ENCODE measurements at regions of chr21 and their contacts with region 1.

Region 1: DNA sequence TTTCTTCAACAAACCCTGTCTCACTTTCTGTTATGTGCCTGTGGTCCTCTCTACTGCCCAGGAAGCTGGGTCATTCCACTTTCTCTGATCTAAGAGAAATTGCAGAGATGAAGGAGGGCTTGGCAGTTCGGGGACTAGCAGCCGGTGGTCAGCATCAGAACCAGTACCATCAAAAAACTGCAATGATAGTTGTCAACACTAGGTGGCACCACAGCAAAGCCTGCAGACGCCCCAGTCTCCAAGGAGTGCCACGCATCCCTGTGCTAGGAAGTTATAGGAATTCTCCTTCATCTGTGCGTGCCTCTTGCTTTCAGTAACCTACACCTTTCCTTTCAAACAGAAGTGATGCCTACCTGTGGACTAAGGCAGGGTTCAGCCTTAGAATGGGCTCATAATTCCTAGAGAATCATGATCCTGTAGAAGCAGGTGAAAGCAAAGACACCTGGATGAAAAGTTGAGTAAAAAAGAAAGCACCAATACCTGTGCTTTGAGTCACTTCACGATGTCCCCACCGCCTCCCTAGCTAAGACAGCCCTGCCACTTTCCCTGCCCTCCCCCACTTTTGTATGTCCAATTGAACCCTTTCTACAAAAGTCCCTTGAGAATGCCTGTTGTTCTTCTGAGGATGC is 129.2 kb downstream of the ADAMTS1 start:
- DNase-seq: no peak
- ATAC-seq: peak; percentile 41 to 82 (median 49)
- H3K4me3 ChIP-seq: no peak overlapping the region
- H3K27ac ChIP-seq: no peak overlapping the region
- H3K4me1 ChIP-seq: peaks cover 8% of the 10 kb centered on the region
- H3K27me3 ChIP-seq: peaks cover 0 to 2% (median 0%) of the 10 kb centered on the region in 3 donors
- CTCF ChIP-seq: peak; percentile 84

Region 2: DNA sequence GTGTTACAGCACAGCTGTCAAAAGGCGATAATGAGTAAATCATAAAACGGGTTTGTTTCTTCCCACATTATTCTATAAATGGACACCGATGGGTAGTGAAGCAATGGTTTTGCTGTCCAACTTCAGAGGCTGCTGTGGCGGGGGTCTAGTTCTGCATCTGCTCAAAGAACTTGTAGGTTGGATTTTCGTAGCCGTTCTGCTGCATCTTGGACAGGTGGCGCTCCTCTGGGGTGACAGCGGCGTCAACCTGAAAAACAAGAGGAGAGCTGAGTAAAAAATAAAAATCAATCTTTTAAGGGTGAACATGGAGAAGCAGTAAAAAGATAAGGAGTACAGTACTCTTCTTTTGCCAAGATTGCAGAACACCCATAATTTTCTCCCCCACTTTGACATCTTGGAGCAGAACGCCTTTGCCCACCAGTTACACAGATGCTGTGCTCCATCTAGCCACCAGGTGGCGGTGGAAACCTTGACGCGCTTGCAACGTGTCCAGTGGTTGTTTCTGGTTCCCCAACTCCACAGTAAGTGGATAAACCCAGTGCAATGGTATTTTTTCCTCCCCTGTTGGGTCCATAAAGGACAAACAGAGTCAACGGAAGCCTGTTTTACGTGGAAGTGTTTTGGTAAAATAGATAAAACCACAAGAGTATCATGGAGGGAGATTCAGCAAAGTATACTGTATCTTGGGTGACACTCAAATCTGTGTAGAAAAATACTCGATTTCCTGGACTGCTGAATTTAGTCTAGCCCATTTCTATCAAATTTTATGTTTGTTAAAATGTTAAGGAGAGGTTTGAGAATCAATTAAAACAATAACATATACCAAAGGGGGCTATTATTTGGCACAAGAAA is 834.2 kb before region 1 on chr21:
- intact Hi-C with region 1: loop called (anchors 5 kb)
- DNase-seq: peak; percentile 59 to 82
- ATAC-seq: peak; percentile 72 to 86 (median 74)
- H3K4me3 ChIP-seq: no peak overlapping the region
- H3K27ac ChIP-seq: no peak overlapping the region
- H3K4me1 ChIP-seq: no peaks in the 10 kb centered on the region
- H3K27me3 ChIP-seq: no peaks in the 10 kb centered on the region
- CTCF ChIP-seq: peak; percentile 97

Region 3: DNA sequence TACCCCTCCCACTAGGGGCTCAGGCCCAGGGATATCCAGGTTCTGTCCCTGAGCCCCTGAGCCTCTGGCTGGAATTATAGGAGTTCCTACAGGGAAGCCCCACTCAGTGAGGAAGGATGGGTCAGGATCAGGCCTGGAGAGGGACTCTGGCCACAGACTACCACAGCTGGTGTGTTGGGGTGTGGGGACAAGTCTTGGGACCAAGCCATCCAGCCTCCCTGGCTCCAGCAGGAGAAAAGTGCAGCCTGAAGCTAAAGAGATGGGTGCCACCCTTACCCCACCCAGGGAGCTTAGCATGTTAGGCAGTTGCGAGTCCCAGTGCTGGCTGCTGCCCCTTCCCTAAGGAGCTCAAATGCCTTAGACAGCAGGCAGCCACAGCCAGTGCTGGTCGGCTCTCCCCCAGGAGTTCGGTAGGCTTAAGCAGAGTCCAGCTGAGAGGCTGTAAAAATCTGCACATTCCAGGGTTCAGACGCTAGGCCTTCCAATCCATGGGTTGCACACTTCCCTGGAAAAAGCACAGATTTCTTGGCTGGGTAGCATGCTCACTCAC is 46.7 kb before region 1 on chr21:
- intact Hi-C with region 1: no loop called
- DNase-seq: no peak
- ATAC-seq: no peak
- H3K4me3 ChIP-seq: no peak overlapping the region
- H3K27ac ChIP-seq: no peak overlapping the region
- H3K4me1 ChIP-seq: no peaks in the 10 kb centered on the region
- H3K27me3 ChIP-seq: no peaks in the 10 kb centered on the region
- CTCF ChIP-seq: no peak